MCF 10A (cell line): ENCODE measurements at regions of chr1 and their contacts with region 1.

Region 1: DNA sequence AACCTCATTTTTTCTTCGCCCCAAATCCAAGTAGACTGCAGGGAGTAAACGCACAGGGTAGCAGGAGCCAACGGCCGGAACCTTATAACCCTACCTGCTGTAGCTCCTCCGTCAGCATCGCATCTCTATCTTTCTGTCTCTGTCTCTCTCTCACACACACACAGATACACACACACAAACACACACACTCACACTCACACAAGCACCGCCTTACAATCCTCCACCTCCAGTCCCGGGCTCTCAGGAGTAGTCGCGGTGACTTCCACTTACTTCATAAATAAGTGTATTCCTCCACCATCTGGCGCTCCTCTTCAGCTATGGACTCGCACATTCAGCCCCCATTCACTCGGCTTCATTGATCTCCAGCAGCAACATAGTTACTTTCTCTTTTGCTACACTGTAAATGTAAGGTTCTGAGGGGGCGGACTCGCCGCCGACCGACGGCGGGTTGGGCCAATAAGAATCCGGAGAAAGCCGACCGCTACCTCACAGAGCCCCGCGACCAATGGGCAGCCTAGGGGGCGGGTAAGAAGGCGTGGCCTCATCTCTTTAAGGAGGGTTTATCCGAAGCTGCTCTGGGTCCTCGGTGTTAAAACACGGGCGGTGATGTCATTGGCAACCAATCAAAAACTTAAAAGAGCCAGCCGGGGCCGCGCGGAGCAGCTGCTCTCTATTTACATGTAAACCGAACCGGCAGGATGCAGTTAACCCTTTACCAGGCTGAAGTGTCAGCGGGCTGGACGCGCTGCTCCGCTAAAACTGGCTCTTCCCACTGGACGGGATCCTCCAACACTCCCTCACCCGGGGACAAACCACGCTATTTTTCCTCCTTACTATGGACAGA is at the start of gene DUSP10:
- DNase-seq: peak; percentile 100
- H3K4me3 Mint-ChIP-seq: no peak within 1 kb of the TSS
- H3K27ac Mint-ChIP-seq: no peak within 1 kb of the TSS
- H3K4me1 Mint-ChIP-seq: peaks cover 25% of the 10 kb centered on the region
- H3K27me3 Mint-ChIP-seq: no peaks in the 10 kb centered on the region
- CTCF ChIP-seq: no peak
- total RNA-seq, gene DUSP10: 15.9 and 22.0 TPM in 2 replicates

Region 2: GRCh38 chr1:221543529-221544120 is 198.3 kb before region 1 on chr1:
- CTCF ChIA-PET with region 1: interaction called, 25 read pairs
- POLR2A ChIA-PET with region 1: interaction called, 12 read pairs
- intact Hi-C with region 1: loop called (anchors 1 kb)
- DNase-seq: peak; percentile 56
- H3K4me3 Mint-ChIP-seq: no peak overlapping the region
- H3K27ac Mint-ChIP-seq: peak overlapping the region; percentile 44
- H3K4me1 Mint-ChIP-seq: peaks cover 15% of the 10 kb centered on the region
- H3K27me3 Mint-ChIP-seq: no peaks in the 10 kb centered on the region
- CTCF ChIP-seq: peak; percentile 86

Region 3: DNA sequence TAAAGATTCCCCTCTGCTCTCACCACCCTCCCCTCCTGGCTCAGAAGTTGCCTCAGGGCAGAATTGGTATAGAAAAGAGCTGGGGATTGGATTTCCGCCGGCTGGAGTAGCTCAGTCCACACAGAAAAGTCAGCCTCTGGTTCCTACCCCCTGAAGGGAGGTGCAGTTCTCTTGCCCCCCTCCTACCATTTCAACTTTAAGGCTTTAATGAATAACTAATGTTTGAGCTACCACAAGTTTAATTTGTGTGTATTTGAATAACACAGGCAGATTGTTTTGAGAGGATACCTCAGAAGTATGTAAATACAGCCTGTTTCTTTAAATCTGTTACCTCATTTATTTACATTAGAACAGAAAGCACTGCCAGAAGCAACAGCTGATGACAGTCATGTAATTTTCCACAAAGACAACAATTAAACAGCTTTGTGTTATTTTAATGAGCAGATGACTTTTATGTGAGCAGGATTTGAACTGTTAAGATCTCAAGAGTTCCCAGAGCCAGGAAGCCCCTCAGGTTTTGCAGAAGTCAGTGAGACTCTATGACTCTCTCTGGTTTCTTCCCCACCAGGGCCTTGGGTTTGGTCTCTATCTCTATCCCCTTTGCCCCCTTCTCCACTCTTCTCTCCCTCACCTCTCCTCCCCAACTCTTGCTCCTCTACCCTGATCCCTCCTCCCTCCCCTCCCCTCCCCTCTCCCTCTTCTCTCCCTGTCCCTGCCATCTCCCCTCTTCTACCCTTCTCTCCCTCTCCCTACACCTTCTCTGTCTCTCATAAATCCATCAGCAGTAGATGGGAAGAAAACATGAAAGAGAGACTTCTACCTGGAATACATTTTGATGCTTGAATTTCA is 26.4 kb before region 1 on chr1:
- CTCF ChIA-PET with region 1: interaction called, 11 read pairs
- POLR2A ChIA-PET with region 1: interaction called, 18 read pairs
- intact Hi-C with region 1: no loop called
- DNase-seq: peak; percentile 60
- H3K4me3 Mint-ChIP-seq: no peak overlapping the region
- H3K27ac Mint-ChIP-seq: peak overlapping the region; percentile 75
- H3K4me1 Mint-ChIP-seq: peaks cover 60% of the 10 kb centered on the region
- H3K27me3 Mint-ChIP-seq: no peaks in the 10 kb centered on the region
- CTCF ChIP-seq: no peak

Region 4: DNA sequence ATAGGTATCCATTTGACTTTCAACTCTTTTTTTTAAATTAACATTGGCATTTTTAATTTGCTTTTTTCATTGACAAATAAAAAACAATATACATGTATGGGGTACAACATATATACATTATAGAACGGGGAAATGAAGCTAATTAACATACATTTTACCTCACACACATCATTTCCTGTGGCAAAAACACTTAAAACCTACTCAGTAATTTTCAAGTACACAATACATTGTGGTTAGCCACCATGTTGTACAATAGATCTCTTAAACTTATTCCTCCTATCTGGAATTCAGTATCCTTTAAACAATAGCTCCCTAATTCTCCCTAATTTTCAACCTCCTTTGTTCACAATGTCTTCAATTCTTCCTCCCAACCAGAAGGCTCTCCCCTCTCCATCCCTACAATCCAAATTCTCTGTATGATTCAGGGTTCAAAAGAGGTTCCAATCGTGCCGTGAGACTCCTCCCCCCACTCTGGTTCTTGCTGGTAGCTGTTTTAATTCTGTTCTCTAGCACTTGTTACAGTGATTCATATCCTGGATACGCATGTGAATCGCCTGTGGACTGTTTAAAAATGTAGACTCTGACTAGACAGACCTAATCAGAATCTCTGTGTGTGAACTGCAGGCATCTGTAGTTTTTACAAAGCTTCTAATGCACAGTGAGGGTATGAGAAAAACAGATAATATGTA is 87.5 kb after region 1 on chr1:
- CTCF ChIA-PET with region 1: interaction called, 7 read pairs
- POLR2A ChIA-PET with region 1: interaction called, 76 read pairs
- intact Hi-C with region 1: no loop called
- DNase-seq: peak; percentile 96
- H3K4me3 Mint-ChIP-seq: peak overlapping the region; percentile 5
- H3K27ac Mint-ChIP-seq: peak overlapping the region; percentile 79
- H3K4me1 Mint-ChIP-seq: peaks cover 69% of the 10 kb centered on the region
- H3K27me3 Mint-ChIP-seq: no peaks in the 10 kb centered on the region
- CTCF ChIP-seq: no peak

Region 5: DNA sequence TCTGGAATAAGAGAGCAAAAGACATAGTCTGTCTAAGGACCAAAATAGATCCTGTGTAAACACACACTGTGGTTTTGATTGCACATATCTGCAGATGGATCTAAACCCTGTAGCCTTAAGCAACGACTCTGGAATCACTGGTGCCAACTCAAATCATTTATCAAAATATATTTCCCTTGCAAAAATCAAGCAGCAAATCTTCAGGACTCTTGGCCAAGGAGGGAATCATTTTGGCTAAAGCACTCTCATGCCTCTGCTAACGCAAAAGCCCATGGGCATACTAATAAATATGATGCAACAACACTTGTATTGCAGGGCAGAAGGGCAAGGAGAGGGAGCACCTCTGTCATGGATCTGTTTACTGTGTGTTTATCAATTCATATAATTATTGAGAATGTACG is 155.4 kb after region 1 on chr1:
- CTCF ChIA-PET with region 1: interaction called, 104 read pairs
- POLR2A ChIA-PET with region 1: interaction called, 104 read pairs
- intact Hi-C with region 1: loop called (anchors 1 kb)
- DNase-seq: peak; percentile 87
- H3K4me3 Mint-ChIP-seq: no peak overlapping the region
- H3K27ac Mint-ChIP-seq: no peak overlapping the region
- H3K4me1 Mint-ChIP-seq: peaks cover 21% of the 10 kb centered on the region
- H3K27me3 Mint-ChIP-seq: no peaks in the 10 kb centered on the region
- CTCF ChIP-seq: no peak

Region 6: DNA sequence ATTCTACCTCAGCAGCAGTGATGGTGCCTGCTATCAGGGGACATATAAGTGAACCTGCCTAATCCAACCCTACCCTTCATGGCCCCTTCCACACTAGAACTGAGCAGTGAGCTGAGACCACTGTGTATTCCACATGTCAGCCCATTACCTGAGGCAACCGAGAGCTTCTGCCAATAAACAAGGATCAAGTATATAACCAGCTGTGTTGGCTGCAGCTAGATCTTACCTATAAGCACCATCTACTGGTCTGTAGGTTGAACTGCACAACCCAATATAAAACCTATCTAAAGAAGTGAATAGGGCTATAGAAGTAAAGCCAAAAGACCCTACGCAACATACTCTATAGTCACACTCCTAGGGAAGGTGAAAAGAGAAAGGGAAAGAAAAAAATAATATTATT is 429.1 kb after region 1 on chr1:
- CTCF ChIA-PET with region 1: interaction called, 14 read pairs
- POLR2A ChIA-PET with region 1: interaction called, 16 read pairs
- intact Hi-C with region 1: loop called (anchors 1 kb)
- DNase-seq: peak; percentile 67
- H3K4me3 Mint-ChIP-seq: no peak overlapping the region
- H3K27ac Mint-ChIP-seq: no peak overlapping the region
- H3K4me1 Mint-ChIP-seq: peaks cover 16% of the 10 kb centered on the region
- H3K27me3 Mint-ChIP-seq: no peaks in the 10 kb centered on the region
- CTCF ChIP-seq: peak; percentile 86